ENCODE measurements at regions of chr4 and their contacts with region 1.

Region 1: GRCh38 chr4:84966383-84967242 is at the start of gene WDFY3:
- DNase-seq: peak; percentile 93
- H3K4me3 Mint-ChIP-seq: peak within 1 kb of the TSS; percentile 88
- H3K27ac Mint-ChIP-seq: peak within 1 kb of the TSS; percentile 97
- H3K4me1 Mint-ChIP-seq: peaks cover 4% of the 10 kb centered on the region
- H3K27me3 Mint-ChIP-seq: no peaks in the 10 kb centered on the region
- CTCF ChIP-seq: no peak
- total RNA-seq, gene WDFY3: 73.7 and 90.7 TPM in 2 replicates

Region 2: DNA sequence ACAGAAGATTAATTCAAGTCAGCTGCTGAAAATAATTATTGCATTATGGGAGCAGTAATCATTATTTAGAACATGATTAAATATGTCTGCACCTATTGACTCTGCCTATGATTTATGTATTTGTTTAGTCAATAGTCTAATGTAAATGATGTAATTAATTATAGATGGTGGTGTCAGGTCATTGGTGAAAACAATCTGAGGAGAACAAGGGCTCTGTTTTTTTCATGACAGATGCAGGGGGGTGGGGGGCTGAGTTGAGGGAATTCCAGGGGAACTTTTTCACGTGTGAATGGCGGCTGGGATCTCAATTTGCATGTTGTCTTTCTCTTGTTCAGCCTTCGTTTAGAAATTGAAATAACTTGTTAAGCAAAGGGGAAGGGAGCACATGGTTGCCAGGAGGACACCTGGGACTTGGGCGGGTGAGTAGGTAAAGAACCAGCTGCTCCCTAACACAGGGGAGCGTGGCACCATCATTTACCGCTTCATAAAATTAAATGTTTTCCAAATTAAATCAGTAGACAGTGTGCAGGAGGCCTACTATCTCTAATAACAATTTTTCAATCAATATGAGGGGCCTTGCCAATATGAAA is 532.9 kb before region 1 on chr4:
- CTCF ChIA-PET with region 1: no interaction called
- POLR2A ChIA-PET with region 1: no interaction called
- intact Hi-C with region 1: no loop called
- DNase-seq: no peak
- H3K4me3 Mint-ChIP-seq: no peak overlapping the region
- H3K27ac Mint-ChIP-seq: no peak overlapping the region
- H3K4me1 Mint-ChIP-seq: peaks cover 6% of the 10 kb centered on the region
- H3K27me3 Mint-ChIP-seq: peaks cover 66% of the 10 kb centered on the region
- CTCF ChIP-seq: no peak

Region 3: DNA sequence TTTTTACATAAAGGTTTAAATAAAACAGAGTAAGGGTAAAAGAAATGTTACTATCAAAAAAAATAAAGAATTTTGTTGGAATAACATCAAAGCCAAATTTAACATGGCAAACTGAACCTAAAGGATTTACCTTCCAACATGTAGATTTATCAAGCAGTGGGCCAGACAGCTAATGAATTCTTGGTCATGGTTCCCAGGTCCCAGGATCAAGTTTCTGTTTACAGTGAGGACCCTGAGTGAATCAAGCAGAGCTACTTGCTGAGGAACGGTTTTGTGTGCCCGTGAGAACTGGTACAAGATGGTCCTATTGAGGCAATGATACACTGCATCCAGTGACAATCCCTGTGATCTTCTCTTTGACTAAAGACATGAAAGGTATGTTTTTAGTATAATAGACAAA is 226.6 kb before region 1 on chr4:
- CTCF ChIA-PET with region 1: interaction called, 19 read pairs
- POLR2A ChIA-PET with region 1: interaction called, 4 read pairs
- intact Hi-C with region 1: no loop called
- DNase-seq: no peak
- H3K4me3 Mint-ChIP-seq: no peak overlapping the region
- H3K27ac Mint-ChIP-seq: no peak overlapping the region
- H3K4me1 Mint-ChIP-seq: no peaks in the 10 kb centered on the region
- H3K27me3 Mint-ChIP-seq: no peaks in the 10 kb centered on the region
- CTCF ChIP-seq: no peak

Region 4: GRCh38 chr4:84804136-84804535 is 162.5 kb before region 1 on chr4:
- CTCF ChIA-PET with region 1: interaction called, 3 read pairs
- POLR2A ChIA-PET with region 1: interaction called, 11 read pairs
- intact Hi-C with region 1: no loop called
- DNase-seq: no peak
- H3K4me3 Mint-ChIP-seq: no peak overlapping the region
- H3K27ac Mint-ChIP-seq: no peak overlapping the region
- H3K4me1 Mint-ChIP-seq: peaks cover 7% of the 10 kb centered on the region
- H3K27me3 Mint-ChIP-seq: no peaks in the 10 kb centered on the region
- CTCF ChIP-seq: no peak

Region 5: GRCh38 chr4:84878090-84878489 is 88.5 kb before region 1 on chr4:
- CTCF ChIA-PET with region 1: interaction called, 5 read pairs
- POLR2A ChIA-PET with region 1: interaction called, 6 read pairs
- intact Hi-C with region 1: loop called (anchors 5 kb)
- DNase-seq: peak; percentile 42
- H3K4me3 Mint-ChIP-seq: no peak overlapping the region
- H3K27ac Mint-ChIP-seq: peak overlapping the region; percentile 75
- H3K4me1 Mint-ChIP-seq: peaks cover 32% of the 10 kb centered on the region
- H3K27me3 Mint-ChIP-seq: no peaks in the 10 kb centered on the region
- CTCF ChIP-seq: no peak

Region 6: GRCh38 chr4:84920617-84921016 is 46.0 kb before region 1 on chr4:
- CTCF ChIA-PET with region 1: no interaction called
- POLR2A ChIA-PET with region 1: interaction called, 13 read pairs
- intact Hi-C with region 1: loop called (anchors 5 kb)
- DNase-seq: peak; percentile 80
- H3K4me3 Mint-ChIP-seq: no peak overlapping the region
- H3K27ac Mint-ChIP-seq: peak overlapping the region; percentile 34
- H3K4me1 Mint-ChIP-seq: peaks cover 33% of the 10 kb centered on the region
- H3K27me3 Mint-ChIP-seq: no peaks in the 10 kb centered on the region
- CTCF ChIP-seq: no peak